PC-3 (cell line): ENCODE measurements at regions of chr15 and their contacts with region 1.

Region 1: GRCh38 chr15:38647683-38648082 is 83.1 kb upstream of the RASGRP1 start:
- DNase-seq: peak; percentile 63
- ATAC-seq: peak; percentile 77
- H3K4me3 ChIP-seq: no peak overlapping the region
- H3K27ac ChIP-seq: no peak overlapping the region
- H3K4me1 ChIP-seq: no peaks in the 10 kb centered on the region
- H3K27me3 ChIP-seq: peaks cover 69% of the 10 kb centered on the region
- CTCF ChIP-seq: peak; percentile 69

Region 2: GRCh38 chr15:38474155-38474757 is 173.4 kb before region 1 on chr15:
- CTCF ChIA-PET with region 1: no interaction called
- POLR2A ChIA-PET with region 1: no interaction called
- intact Hi-C with region 1: loop called (anchors 10 kb)
- DNase-seq: peak; percentile 66
- ATAC-seq: peak; percentile 95
- H3K4me3 ChIP-seq: no peak overlapping the region
- H3K27ac ChIP-seq: no peak overlapping the region
- H3K4me1 ChIP-seq: no peaks in the 10 kb centered on the region
- H3K27me3 ChIP-seq: no peaks in the 10 kb centered on the region
- CTCF ChIP-seq: peak; percentile 80

Region 3: GRCh38 chr15:38563723-38564519 is 83.8 kb before region 1 on chr15:
- CTCF ChIA-PET with region 1: no interaction called
- POLR2A ChIA-PET with region 1: no interaction called
- intact Hi-C with region 1: loop called (anchors 10 kb)
- DNase-seq: peak; percentile 53
- ATAC-seq: peak; percentile 93
- H3K4me3 ChIP-seq: peak overlapping the region; percentile 65
- H3K27ac ChIP-seq: no peak overlapping the region
- H3K4me1 ChIP-seq: no peaks in the 10 kb centered on the region
- H3K27me3 ChIP-seq: peaks cover 55% of the 10 kb centered on the region
- CTCF ChIP-seq: peak; percentile 90